ENCODE measurements at regions of chr1 and their contacts with region 1.

Region 1: DNA sequence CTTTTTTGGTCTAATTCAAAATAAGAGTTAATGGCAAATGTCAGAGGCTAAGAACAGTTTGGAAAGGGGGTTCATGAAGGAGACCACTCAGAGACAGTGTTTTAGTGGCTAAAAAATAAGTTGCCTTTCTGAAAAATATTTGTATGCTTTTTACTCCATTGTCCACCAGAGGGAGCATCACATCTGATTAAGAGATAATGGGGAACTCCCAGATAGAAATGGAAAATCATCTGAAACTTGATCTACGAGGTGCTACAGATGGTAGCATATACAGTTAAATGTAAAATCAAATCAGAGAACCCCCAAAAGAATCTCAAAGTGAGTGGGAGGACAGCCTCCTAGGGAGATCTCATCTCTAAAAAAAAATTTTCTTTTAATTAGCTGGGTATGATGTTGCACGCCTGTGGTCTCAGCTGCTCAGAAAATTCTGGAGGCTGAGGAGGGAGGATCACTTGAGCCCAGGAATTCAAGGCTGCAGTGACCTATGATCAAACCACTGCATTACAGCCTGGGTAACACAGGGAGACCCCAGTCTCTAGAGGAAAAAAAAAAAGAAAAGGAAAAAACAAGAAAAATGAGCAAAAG is 9.7 kb downstream of the SMYD3 start:
- DNase-seq: no peak
- ATAC-seq: peak in 1 of 2 donors; percentile 35

Region 2: DNA sequence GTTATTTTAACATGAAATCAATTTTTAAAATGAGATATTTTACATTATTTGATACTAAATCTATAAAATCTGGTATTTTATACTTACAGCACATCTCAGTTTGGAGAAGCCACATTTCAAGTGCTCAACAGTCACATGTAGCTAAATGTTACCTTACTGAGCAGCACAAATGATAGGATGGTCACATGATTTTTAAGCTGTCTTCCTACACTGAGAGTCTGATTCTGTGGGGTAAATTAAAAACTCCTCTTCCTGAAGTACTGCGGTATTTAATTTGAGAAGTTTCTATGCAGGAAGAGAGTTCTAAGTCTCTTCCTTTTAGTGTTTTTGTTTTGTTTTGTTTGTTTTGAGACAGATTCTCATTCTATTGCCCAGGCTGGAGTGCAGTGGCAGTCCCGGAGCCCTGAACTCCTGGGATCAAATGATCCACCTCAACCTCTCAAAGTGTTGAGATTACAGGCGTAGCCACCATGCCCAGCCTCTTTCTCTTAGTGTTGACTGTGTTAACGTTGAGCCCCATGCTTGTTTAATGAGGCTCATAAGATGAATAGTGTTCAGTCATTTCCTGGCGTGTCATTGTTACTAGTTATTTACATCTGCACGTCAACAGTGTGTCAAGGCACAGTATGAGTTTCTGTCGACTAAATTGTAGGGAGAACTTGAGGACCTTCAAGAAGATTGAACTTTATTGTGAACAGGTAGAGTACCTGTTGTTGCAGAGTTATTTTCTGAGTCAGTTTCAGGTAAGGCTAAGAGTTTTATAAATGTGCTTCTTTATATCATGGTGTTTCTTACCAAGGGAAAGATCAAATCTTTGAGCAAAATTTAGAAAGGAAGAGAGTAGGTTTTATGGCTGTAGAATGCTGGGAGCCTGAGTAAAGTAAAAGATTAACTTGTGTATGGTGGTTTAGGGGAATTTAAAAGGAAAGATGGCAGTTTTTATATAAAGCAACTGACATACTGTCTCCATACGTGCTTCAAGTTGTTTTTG is 72.1 kb after region 1 on chr1:
- intact Hi-C with region 1: no loop called
- DNase-seq: no peak
- ATAC-seq: no peak

Region 3: DNA sequence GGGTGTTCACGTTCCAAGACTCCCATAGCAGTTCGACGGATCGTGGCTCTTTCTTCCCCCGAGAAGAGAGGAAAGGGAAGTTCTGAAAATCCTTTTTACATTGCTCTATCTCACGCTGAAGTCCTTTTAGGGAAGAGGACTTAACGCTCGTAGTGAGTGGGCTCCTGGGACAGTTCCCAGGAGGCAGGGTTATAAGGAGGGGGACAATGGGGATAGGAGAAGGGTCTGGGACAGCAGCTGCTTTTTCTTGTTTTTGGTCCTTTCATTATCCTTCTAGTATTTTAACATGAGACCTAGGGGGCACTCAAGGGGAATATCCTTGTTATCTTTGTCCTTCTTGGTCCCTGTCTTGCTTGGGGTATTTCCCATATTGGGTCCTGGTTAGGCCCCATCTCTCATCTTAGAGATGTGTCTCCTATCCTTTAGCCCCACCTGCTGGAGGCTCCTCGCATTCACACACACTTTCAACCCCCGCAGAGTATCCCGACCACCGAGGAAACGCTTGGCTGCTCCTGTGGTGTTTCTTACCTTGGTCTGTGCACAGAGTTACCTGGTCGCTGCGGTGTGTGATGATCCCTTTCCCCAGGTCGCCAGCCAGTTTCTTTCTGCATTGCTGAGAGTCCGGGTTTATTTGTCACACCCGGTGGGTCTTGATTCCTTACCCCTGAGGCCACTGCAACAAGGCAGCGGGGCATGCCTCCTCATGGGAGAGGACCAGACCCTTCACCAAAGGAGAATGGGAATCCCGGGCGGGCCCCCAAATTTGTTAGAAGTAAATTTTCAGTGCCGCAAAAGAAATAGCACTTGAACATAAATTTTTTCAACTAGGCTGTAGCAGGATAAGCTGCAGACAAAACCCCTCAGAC is 256.5 kb after region 1 on chr1:
- intact Hi-C with region 1: loop called in 1 of 2 experiments (anchors 5 kb)
- DNase-seq: peak; percentile 46
- ATAC-seq: peak; percentile 79 to 85

Measured in left cardiac atrium (tissue), 4 donors.